ENCODE measurements at regions of chr2 and their contacts with region 1.

Region 1: GRCh38 chr2:37877457-37878315 is 47.4 kb upstream of the RMDN2 start:
- DNase-seq: peak; percentile 37
- ATAC-seq: no peak
- H3K4me3 Mint-ChIP-seq: no peak overlapping the region
- H3K27ac Mint-ChIP-seq: no peak overlapping the region
- H3K4me1 Mint-ChIP-seq: peaks cover 11% of the 10 kb centered on the region
- H3K27me3 Mint-ChIP-seq: peaks cover 18% of the 10 kb centered on the region

Region 2: DNA sequence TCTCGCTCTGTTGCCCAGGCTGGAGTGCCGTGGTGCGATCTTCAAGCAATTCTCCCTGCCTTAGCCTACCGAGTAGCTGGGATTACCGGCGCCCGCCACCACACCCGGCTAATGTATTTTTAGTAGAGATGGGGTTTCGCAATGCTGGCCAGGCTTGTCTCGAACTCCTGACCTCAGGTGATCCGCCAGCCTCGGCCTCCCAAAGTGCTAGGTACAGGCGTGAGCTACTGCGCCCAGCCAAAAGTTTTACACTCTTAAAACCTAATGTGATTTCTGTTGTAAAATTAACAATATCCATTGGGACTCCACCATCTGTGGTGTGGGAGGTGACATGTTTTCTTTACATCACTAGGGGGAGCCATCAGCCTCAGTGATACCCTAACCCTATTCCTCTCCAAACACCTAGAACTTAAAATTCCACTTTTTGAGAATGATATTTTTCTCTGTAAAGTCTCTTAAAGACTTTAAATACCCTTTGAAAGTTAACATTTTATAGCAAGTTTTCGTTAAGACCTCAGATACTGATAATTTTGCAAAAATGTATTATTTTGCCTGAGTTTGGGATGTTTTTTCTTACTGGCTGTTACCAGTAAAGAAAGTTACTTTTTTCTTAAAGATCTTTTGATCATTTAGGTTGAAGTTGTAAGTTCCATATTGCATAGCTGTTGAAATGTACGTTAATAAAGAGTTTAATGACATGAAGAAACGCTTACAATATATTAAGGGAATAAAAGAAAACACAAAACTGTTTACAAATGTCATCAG is 709.3 kb before region 1 on chr2:
- CTCF ChIA-PET with region 1: interaction called, 5 read pairs
- POLR2A ChIA-PET with region 1: no interaction called
- intact Hi-C with region 1: loop called (anchors 1 to 10 kb)
- DNase-seq: peak; percentile 45
- ATAC-seq: peak; percentile 87
- H3K4me3 Mint-ChIP-seq: no peak overlapping the region
- H3K27ac Mint-ChIP-seq: no peak overlapping the region
- H3K4me1 Mint-ChIP-seq: no peaks in the 10 kb centered on the region
- H3K27me3 Mint-ChIP-seq: no peaks in the 10 kb centered on the region

Region 3: DNA sequence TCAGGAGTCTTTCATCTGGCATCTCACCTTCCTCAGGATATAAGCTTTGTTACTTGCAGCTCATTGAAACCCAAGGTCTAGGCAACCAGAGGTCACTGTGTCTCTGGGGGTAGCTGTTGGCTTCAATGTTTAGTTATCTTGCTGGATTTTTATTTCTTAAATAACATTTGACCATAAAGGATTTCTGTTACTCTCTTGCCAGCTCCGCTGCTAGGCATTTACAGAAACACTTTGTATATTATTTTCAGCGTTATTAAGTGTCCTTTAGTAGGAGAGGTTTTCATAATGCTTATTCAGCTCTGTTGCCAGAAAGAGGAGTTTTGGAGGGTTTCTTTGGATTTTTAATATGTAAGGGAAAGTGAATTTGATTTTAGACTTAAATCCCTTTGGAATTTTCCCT is 471.9 kb before region 1 on chr2:
- CTCF ChIA-PET with region 1: interaction called, 143 read pairs
- POLR2A ChIA-PET with region 1: no interaction called
- intact Hi-C with region 1: no loop called
- DNase-seq: no peak
- ATAC-seq: no peak
- H3K4me3 Mint-ChIP-seq: no peak overlapping the region
- H3K27ac Mint-ChIP-seq: no peak overlapping the region
- H3K4me1 Mint-ChIP-seq: no peaks in the 10 kb centered on the region
- H3K27me3 Mint-ChIP-seq: peaks cover 2% of the 10 kb centered on the region

Region 4: GRCh38 chr2:37549598-37549997 is 328.1 kb before region 1 on chr2:
- CTCF ChIA-PET with region 1: interaction called, 5 read pairs
- POLR2A ChIA-PET with region 1: no interaction called
- intact Hi-C with region 1: loop called in 1 of 2 experiments (anchors 5 kb)
- DNase-seq: no peak
- ATAC-seq: no peak
- H3K4me3 Mint-ChIP-seq: no peak overlapping the region
- H3K27ac Mint-ChIP-seq: no peak overlapping the region
- H3K4me1 Mint-ChIP-seq: peaks cover 11% of the 10 kb centered on the region
- H3K27me3 Mint-ChIP-seq: no peaks in the 10 kb centered on the region

Region 5: GRCh38 chr2:37698931-37699481 is 178.7 kb before region 1 on chr2:
- CTCF ChIA-PET with region 1: no interaction called
- POLR2A ChIA-PET with region 1: no interaction called
- intact Hi-C with region 1: no loop called
- DNase-seq: no peak
- ATAC-seq: no peak
- H3K4me3 Mint-ChIP-seq: no peak overlapping the region
- H3K27ac Mint-ChIP-seq: no peak overlapping the region
- H3K4me1 Mint-ChIP-seq: no peaks in the 10 kb centered on the region
- H3K27me3 Mint-ChIP-seq: no peaks in the 10 kb centered on the region

Region 6: GRCh38 chr2:37786854-37787253 is 90.8 kb before region 1 on chr2:
- CTCF ChIA-PET with region 1: no interaction called
- POLR2A ChIA-PET with region 1: no interaction called
- intact Hi-C with region 1: no loop called
- DNase-seq: no peak
- ATAC-seq: no peak
- H3K4me3 Mint-ChIP-seq: no peak overlapping the region
- H3K27ac Mint-ChIP-seq: no peak overlapping the region
- H3K4me1 Mint-ChIP-seq: no peaks in the 10 kb centered on the region
- H3K27me3 Mint-ChIP-seq: no peaks in the 10 kb centered on the region

Region 7: GRCh38 chr2:37832590-37833197 is 45.0 kb before region 1 on chr2:
- CTCF ChIA-PET with region 1: interaction called, 59 read pairs
- POLR2A ChIA-PET with region 1: no interaction called
- intact Hi-C with region 1: loop called (anchors 1 kb)
- DNase-seq: peak; percentile 90
- ATAC-seq: peak; percentile 76
- H3K4me3 Mint-ChIP-seq: no peak overlapping the region
- H3K27ac Mint-ChIP-seq: peak overlapping the region; percentile 32
- H3K4me1 Mint-ChIP-seq: peaks cover 22% of the 10 kb centered on the region
- H3K27me3 Mint-ChIP-seq: no peaks in the 10 kb centered on the region

Region 8: DNA sequence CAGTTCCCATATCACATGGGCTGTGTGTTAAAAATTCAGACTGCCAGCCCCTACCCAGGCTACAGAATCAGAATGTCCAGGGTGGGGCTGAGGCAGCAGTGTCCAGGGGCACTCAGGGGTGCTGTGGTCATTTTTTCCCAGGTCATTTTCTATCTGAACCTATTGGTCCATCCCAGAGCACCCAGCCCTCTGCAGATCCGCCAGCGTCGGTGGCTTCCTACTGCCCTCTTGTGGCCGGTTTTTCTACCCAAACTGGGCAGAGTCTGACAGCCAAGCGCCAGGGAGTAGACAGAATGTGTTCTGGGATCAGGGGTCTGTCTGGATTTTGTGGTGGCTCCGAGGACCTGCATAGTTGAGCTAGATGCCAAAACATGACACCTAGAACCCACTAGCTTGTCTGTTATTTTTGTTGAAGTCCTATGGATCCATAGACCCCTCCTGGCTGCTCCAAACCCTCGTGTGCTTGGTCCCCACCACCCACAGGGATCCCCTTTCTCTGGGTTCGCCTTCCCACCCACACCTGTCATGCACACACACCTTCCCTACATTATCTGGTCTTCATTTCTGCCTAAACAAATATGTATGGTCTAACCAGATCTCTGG is 13.3 kb after region 1 on chr2:
- CTCF ChIA-PET with region 1: interaction called, 23 read pairs
- POLR2A ChIA-PET with region 1: interaction called, 3 read pairs
- intact Hi-C with region 1: no loop called
- DNase-seq: peak; percentile 83
- ATAC-seq: peak; percentile 43
- H3K4me3 Mint-ChIP-seq: no peak overlapping the region
- H3K27ac Mint-ChIP-seq: no peak overlapping the region
- H3K4me1 Mint-ChIP-seq: peaks cover 46% of the 10 kb centered on the region
- H3K27me3 Mint-ChIP-seq: peaks cover 8% of the 10 kb centered on the region

Region 9: DNA sequence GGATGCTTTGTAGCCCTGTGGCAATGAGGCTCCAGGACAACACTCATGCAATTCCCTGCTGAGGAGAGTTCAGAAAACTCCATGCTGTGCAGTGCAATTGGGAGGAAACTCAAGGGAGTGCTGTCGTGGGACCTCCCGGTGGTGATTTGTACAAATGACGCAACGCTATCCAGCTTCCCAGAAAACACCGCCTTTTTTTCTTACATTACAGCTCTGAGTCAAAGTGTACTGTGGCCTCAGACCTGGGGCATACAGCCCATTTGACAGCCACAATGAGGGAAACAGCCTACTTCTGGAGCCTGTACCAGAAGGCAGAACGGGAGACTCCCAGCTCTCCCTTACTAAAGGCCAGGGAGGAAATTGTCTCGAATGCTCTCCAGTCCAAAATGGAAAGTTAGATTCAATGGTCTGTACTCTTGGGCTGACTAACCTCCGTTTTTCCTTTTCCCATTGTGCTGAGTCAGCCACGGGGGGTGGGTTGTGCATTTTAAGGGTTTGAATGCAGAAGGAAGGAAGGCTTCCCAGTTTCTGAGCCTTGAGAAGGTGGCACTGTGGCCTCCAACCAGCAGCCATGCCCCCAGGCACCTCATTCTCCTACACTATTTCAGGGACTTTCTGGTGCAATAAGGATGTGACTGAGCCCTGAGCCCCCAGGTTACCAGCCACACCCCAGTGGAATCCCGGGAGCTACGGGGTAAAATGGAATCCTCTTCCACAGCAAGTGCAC is 214.7 kb after region 1 on chr2:
- CTCF ChIA-PET with region 1: no interaction called
- POLR2A ChIA-PET with region 1: no interaction called
- intact Hi-C with region 1: no loop called
- DNase-seq: no peak
- ATAC-seq: no peak
- H3K4me3 Mint-ChIP-seq: no peak overlapping the region
- H3K27ac Mint-ChIP-seq: no peak overlapping the region
- H3K4me1 Mint-ChIP-seq: peaks cover 9% of the 10 kb centered on the region
- H3K27me3 Mint-ChIP-seq: peaks cover 45% of the 10 kb centered on the region

Region 10: GRCh38 chr2:38327580-38327979 is 449.9 kb after region 1 on chr2:
- CTCF ChIA-PET with region 1: no interaction called
- POLR2A ChIA-PET with region 1: no interaction called
- intact Hi-C with region 1: no loop called
- DNase-seq: peak; percentile 15
- ATAC-seq: no peak
- H3K4me3 Mint-ChIP-seq: no peak overlapping the region
- H3K27ac Mint-ChIP-seq: no peak overlapping the region
- H3K4me1 Mint-ChIP-seq: peaks cover 37% of the 10 kb centered on the region
- H3K27me3 Mint-ChIP-seq: no peaks in the 10 kb centered on the region

Measured in activated CD4-positive, alpha-beta T cell treated with anti-CD3 and anti-CD28 coated beads for 36 hours (primary cell).